ENCODE measurements at regions of chr15 and their contacts with region 1.

Region 1: GRCh38 chr15:97140216-97140615 is 809.7 kb downstream of the NR2F2 start:
- DNase-seq: no peak

Region 2: GRCh38 chr15:96974761-96975160 is 165.5 kb before region 1 on chr15:
- intact Hi-C with region 1: no loop called
- DNase-seq: no peak

Region 3: GRCh38 chr15:97561529-97561928 is 421.3 kb after region 1 on chr15:
- intact Hi-C with region 1: loop called in 1 of 2 experiments (anchors 5 kb)
- DNase-seq: no peak

Measured in posterior vena cava (tissue), 2 donors.